RWPE1 (cell line): ENCODE measurements at regions of chr6 and their contacts with region 1.

Region 1: GRCh38 chr6:6057424-6058053 is 50.8 kb upstream of the NRN1 start:
- DNase-seq: peak; percentile 22
- H3K27ac ChIP-seq: no peak overlapping the region
- CTCF ChIP-seq: peak; percentile 46

Region 2: DNA sequence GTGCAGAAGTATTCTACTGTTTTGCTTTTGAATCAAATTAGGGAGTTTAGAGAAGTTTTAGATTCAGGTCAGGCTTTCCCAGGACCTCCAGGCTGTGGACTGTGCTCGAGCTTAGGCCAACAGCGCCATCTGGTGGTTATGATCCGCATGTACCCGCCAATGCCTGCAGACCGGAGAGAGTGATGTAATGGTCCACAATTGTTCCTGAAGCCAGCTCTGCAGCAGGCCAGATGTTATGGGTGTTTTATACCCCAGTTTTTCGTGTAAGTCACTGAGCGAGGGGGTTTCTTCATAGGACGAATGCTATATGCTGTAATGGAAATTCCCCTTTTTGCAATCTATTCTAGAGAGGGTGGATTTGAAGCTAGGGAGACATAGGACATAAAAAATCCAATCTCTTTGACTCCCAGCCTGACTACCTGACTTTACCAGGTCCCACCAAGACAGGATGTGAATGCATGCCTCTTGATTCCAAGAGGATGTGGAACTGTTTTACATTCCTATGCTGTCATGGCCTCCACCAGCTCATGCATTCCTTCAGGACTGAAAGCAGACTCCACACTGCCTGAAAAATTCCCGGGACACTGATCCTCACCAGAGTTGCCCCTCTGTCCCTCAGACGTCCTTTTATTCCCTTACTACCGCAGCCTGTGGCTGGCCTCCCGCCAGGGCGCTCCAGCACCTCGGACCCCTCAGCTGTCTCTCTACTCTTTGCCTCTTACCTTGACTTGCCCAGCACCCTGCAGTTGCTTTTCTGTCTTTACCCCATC is 489.8 kb after region 1 on chr6:
- CTCF ChIA-PET with region 1: interaction called, 13 read pairs
- POLR2A ChIA-PET with region 1: no interaction called
- DNase-seq: peak; percentile 88
- H3K27ac ChIP-seq: no peak overlapping the region
- CTCF ChIP-seq: peak; percentile 92